ENCODE measurements at regions of chr14 and their contacts with region 1.

Region 1: GRCh38 chr14:52824507-52824906 is 33.1 kb upstream of the GNPNAT1 start:
- DNase-seq: peak; percentile 17
- H3K4me3 ChIP-seq: no peak overlapping the region
- H3K27ac ChIP-seq: no peak overlapping the region
- H3K4me1 ChIP-seq: peaks cover 4% of the 10 kb centered on the region
- H3K27me3 ChIP-seq: no peaks in the 10 kb centered on the region
- CTCF ChIP-seq: no peak
- POLR2A ChIP-seq: no peak

Region 2: DNA sequence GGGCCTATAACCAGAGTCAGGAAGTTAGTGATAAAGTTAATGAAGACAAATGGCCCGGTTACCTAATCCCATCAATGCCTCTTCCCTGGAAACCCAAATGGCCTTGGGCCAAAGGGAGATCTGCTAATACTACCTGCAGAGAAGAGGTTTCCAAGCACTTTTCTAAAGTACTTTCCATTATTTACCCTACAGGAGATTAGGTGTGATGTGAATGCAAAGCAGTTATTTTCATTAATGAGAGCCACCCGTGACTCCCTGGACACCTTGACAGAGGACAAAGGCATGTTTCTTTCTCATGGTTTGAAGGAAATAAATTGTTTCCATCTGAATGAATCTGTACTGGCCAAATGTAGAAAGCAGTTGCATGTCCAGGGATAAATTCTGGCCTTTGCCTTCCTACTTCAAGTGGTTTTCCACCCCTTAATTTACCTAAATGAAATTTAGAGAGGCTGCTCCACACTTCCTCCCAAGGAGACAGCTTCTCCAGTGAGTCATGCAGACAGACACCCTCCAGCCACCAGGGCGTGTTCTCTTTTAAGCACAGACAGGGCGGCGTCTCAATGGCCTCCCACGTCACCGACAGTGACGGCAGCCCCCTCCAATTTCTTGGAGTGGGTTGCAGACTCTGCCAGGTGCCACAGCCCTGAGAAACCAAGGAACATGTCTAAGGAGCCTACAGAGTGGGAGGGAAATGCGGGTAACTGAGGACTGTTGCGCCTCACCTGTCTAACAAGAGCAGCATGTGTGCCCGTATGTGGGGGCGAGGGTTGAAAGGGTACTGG is 10.8 kb after region 1 on chr14:
- CTCF ChIA-PET with region 1: interaction called, 16 read pairs
- POLR2A ChIA-PET with region 1: no interaction called
- dilution Hi-C with region 1: no loop called
- intact Hi-C with region 1: no loop called
- DNase-seq: no peak
- H3K4me3 ChIP-seq: no peak overlapping the region
- H3K27ac ChIP-seq: peak overlapping the region; percentile 74
- H3K4me1 ChIP-seq: peaks cover 10% of the 10 kb centered on the region
- H3K27me3 ChIP-seq: no peaks in the 10 kb centered on the region
- CTCF ChIP-seq: no peak
- POLR2A ChIP-seq: no peak

Region 3: DNA sequence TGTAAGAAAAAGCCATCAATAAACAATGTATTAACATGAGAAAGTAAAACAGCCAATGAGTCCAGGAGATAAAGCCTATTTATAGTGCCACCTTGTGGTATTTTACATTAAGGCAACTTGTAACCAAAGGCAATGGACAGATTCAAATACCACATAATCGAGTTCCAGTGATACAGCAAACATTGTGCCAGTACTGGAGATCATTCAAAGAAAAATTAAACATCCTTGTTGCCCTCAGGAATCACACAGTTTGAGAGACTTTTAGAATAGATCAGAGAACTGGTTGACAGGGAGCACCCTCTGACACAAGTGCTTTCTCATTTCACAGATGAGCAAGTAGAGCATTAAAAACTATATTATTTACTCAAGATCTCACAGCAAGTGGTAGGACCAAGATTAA is 230.5 kb after region 1 on chr14:
- CTCF ChIA-PET with region 1: interaction called, 33 read pairs
- POLR2A ChIA-PET with region 1: no interaction called
- dilution Hi-C with region 1: no loop called
- intact Hi-C with region 1: loop called (anchors 1 kb)
- DNase-seq: peak; percentile 70
- H3K4me3 ChIP-seq: no peak overlapping the region
- H3K27ac ChIP-seq: no peak overlapping the region
- H3K4me1 ChIP-seq: peaks cover 3% of the 10 kb centered on the region
- H3K27me3 ChIP-seq: no peaks in the 10 kb centered on the region
- CTCF ChIP-seq: peak; percentile 46 to 50
- POLR2A ChIP-seq: no peak

Region 4: GRCh38 chr14:53316499-53316898 is 492.0 kb after region 1 on chr14:
- CTCF ChIA-PET with region 1: no interaction called
- POLR2A ChIA-PET with region 1: no interaction called
- dilution Hi-C with region 1: no loop called
- intact Hi-C with region 1: no loop called
- DNase-seq: no peak
- H3K4me3 ChIP-seq: no peak overlapping the region
- H3K27ac ChIP-seq: no peak overlapping the region
- H3K4me1 ChIP-seq: no peaks in the 10 kb centered on the region
- H3K27me3 ChIP-seq: no peaks in the 10 kb centered on the region
- CTCF ChIP-seq: no peak
- POLR2A ChIP-seq: no peak